CD8-positive, alpha-beta T cell (primary cell): ENCODE measurements at regions of chr2 and their contacts with region 1.

Region 1: DNA sequence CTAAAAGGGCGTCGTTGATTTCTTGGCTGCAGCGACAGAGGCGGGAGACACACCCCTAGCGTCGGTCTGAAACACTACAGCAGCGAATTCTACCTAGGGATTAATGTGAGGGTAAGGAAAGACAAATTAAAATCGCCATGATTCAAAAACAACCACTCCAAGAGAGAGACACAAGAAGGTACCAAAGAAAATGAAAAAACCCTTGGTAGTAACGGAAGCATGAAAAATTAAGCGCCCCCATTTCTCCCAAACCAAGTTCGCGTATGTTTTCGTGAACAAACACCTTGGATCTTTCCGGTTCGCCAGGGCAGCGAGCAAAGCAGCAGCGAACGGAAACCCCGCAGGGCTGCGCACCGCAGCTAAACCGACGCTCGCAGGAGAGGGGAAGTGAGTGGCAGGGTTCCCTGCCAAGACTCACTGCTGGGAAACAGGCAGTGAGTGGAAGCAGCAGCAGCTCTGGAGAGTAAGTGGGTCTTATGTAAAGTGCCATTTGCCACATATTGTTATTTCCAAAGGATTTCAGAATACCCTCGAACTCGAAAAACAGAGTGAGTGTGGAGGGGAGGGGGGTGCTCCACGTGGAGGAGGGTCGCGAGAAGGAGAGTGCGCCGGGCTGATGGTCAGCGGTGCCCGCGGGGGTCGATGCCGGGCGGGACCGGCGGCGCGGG is 1.0 kb downstream of the PPP3R1 start:
- DNase-seq: peak; percentile 54 to 94 (median 76)
- ATAC-seq: peak; percentile 66
- H3K4me3 ChIP-seq: peak overlapping the region; percentile 68
- H3K4me3 Mint-ChIP-seq: peak overlapping the region; percentile 89
- H3K27ac ChIP-seq: peak overlapping the region; percentile 84 to 85
- H3K27ac Mint-ChIP-seq: peak overlapping the region; percentile 95
- H3K4me1 ChIP-seq: peaks cover 60% of the 10 kb centered on the region
- H3K4me1 Mint-ChIP-seq: peaks cover 42% of the 10 kb centered on the region
- H3K27me3 ChIP-seq: no peaks in the 10 kb centered on the region
- H3K27me3 Mint-ChIP-seq: no peaks in the 10 kb centered on the region
- CTCF ChIP-seq: peak; percentile 70

Region 2: GRCh38 chr2:68045342-68045741 is 206.0 kb before region 1 on chr2:
- CTCF ChIA-PET with region 1: no interaction called
- POLR2A ChIA-PET with region 1: no interaction called
- intact Hi-C with region 1: no loop called
- DNase-seq: no peak
- ATAC-seq: no peak
- H3K4me3 ChIP-seq: no peak overlapping the region
- H3K4me3 Mint-ChIP-seq: no peak overlapping the region
- H3K27ac ChIP-seq: no peak overlapping the region
- H3K27ac Mint-ChIP-seq: no peak overlapping the region
- H3K4me1 ChIP-seq: no peaks in the 10 kb centered on the region
- H3K4me1 Mint-ChIP-seq: peaks cover 20% of the 10 kb centered on the region
- H3K27me3 ChIP-seq: no peaks in the 10 kb centered on the region
- H3K27me3 Mint-ChIP-seq: no peaks in the 10 kb centered on the region
- CTCF ChIP-seq: no peak

Region 3: DNA sequence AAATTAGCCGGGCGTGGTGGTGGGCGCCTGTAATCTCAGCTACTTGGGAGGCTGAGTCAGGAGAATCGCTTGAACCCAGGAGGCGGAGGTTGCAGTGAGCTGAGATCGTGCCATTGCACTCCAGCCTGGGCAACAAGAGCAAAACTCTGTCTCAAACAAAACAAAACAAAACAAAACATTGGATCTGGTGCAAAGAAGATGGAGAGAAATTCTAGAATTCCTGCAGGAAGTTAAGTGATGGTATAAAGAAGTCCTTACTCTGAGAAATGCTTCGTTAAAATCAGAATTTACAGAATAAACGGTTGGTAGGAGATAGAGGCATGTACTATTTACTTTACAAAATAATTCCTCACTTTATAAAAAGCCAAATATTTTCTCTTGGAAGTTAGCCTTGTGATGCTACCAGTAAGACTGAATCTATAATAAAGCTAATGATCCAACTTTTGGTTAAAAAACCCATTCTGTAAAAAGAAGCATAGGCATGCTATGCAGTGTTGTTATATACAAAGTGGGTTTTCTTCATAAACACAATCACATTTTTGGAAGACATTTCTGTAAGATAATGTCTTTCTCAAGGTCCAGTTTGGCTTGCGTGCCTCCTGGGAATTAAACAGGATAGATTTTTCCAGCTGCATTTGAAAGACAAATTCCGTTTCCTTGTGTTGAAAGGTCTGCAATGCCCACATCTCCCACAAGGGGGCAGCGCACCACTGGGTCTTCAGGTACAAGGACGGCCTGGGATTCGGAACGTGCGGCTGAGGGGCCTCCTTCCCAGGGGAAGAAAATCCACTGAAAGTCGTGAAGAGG is 129.2 kb before region 1 on chr2:
- CTCF ChIA-PET with region 1: interaction called, 5 read pairs
- POLR2A ChIA-PET with region 1: no interaction called
- intact Hi-C with region 1: loop called in 1 of 2 experiments (anchors 1 kb)
- DNase-seq: peak; percentile 48 to 85 (median 78)
- ATAC-seq: peak; percentile 69
- H3K4me3 ChIP-seq: no peak overlapping the region
- H3K4me3 Mint-ChIP-seq: peak overlapping the region; percentile 35
- H3K27ac ChIP-seq: no peak overlapping the region
- H3K27ac Mint-ChIP-seq: no peak overlapping the region
- H3K4me1 ChIP-seq: peaks cover 4% of the 10 kb centered on the region
- H3K4me1 Mint-ChIP-seq: peaks cover 3% of the 10 kb centered on the region
- H3K27me3 ChIP-seq: no peaks in the 10 kb centered on the region
- H3K27me3 Mint-ChIP-seq: no peaks in the 10 kb centered on the region
- CTCF ChIP-seq: peak; percentile 99

Region 4: GRCh38 chr2:68196120-68196716 is 55.1 kb before region 1 on chr2:
- CTCF ChIA-PET with region 1: interaction called, 20 read pairs
- POLR2A ChIA-PET with region 1: interaction called, 4 read pairs
- intact Hi-C with region 1: loop called (anchors 1 to 2 kb)
- DNase-seq: peak in 6 of 9 experiments; percentile 14 to 76 (median 38)
- ATAC-seq: peak; percentile 20
- H3K4me3 ChIP-seq: no peak overlapping the region
- H3K4me3 Mint-ChIP-seq: no peak overlapping the region
- H3K27ac ChIP-seq: no peak overlapping the region
- H3K27ac Mint-ChIP-seq: peak overlapping the region; percentile 62
- H3K4me1 ChIP-seq: peaks cover 8% of the 10 kb centered on the region
- H3K4me1 Mint-ChIP-seq: peaks cover 61% of the 10 kb centered on the region
- H3K27me3 ChIP-seq: no peaks in the 10 kb centered on the region
- H3K27me3 Mint-ChIP-seq: no peaks in the 10 kb centered on the region
- CTCF ChIP-seq: peak; percentile 54

Region 5: GRCh38 chr2:68362069-68362468 is 110.7 kb after region 1 on chr2:
- CTCF ChIA-PET with region 1: no interaction called
- POLR2A ChIA-PET with region 1: no interaction called
- intact Hi-C with region 1: loop called in 1 of 2 experiments (anchors 2 kb)
- DNase-seq: peak; percentile 67 to 92 (median 80)
- ATAC-seq: peak; percentile 90
- H3K4me3 ChIP-seq: peak overlapping the region; percentile 16 to 32
- H3K4me3 Mint-ChIP-seq: peak overlapping the region; percentile 69
- H3K27ac ChIP-seq: peak overlapping the region in 1 of 2 experiments; percentile 72
- H3K27ac Mint-ChIP-seq: peak overlapping the region; percentile 33
- H3K4me1 ChIP-seq: peaks cover 9% of the 10 kb centered on the region
- H3K4me1 Mint-ChIP-seq: peaks cover 25% of the 10 kb centered on the region
- H3K27me3 ChIP-seq: no peaks in the 10 kb centered on the region
- H3K27me3 Mint-ChIP-seq: no peaks in the 10 kb centered on the region
- CTCF ChIP-seq: peak; percentile 73

Region 6: DNA sequence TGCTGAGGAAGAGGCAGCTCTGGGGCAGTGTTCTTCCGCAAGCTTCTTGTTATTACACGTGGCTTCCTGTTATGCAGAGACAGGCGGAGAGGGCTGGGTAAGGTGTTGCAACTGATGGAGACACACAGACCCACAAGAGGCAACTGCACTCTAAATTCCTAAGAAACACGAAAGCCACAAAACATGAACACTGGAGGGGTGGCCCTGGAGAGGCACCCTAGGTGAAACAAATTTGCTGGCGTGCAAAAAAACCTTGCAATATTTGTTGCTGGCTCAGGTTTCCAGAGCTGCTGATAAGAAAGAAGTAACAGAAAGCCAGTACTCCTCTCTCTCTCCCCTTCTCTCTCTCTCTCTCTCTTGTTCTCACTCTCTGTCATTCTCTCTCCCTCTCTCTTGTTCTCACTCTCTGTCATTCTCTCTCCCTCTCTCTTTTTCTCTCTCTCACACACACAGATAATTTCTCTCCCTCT is 515.1 kb after region 1 on chr2:
- CTCF ChIA-PET with region 1: no interaction called
- POLR2A ChIA-PET with region 1: interaction called, 3 read pairs
- intact Hi-C with region 1: loop called in 1 of 2 experiments (anchors 10 kb)
- DNase-seq: peak; percentile 37 to 91 (median 75)
- ATAC-seq: peak; percentile 62
- H3K4me3 ChIP-seq: peak overlapping the region; percentile 25 to 34
- H3K4me3 Mint-ChIP-seq: peak overlapping the region; percentile 81
- H3K27ac ChIP-seq: peak overlapping the region; percentile 73 to 88
- H3K27ac Mint-ChIP-seq: peak overlapping the region; percentile 100
- H3K4me1 ChIP-seq: peaks cover 98% of the 10 kb centered on the region
- H3K4me1 Mint-ChIP-seq: peaks cover 95% of the 10 kb centered on the region
- H3K27me3 ChIP-seq: no peaks in the 10 kb centered on the region
- H3K27me3 Mint-ChIP-seq: no peaks in the 10 kb centered on the region
- CTCF ChIP-seq: no peak